ENCODE measurements at regions of chr6 and their contacts with region 1.

Region 1: DNA sequence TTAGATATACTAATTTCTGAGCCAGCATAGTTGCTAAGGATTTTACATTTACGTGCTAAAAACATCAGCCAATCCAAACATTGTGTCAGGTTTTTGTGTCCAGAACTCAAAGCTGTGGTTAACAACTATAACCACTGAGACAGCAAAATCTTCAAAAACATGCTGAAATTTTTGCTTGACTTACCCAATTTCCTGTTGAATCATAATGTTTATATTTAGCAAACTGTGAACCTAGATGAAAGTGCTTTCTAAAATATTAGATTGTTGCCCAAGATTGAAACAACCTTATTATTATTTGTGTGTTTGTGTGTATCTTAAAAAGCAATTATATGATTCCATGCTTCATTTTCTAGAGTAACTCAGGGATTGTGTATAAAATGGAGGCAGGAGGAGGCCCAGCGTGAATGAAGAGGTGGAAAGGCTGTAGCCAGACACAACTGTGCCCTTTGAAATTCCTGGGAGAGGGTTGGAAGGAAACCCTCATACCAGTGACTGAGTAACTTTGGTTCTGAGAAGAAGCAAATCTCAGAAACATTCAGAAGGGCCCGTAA is 48.0 kb downstream of the ARMC2 start:
- DNase-seq: no peak
- H3K4me3 Mint-ChIP-seq: peak overlapping the region; percentile 30
- H3K27ac Mint-ChIP-seq: peak overlapping the region; percentile 80
- H3K4me1 Mint-ChIP-seq: peaks cover 37% of the 10 kb centered on the region
- H3K27me3 Mint-ChIP-seq: peaks cover 7% of the 10 kb centered on the region

Region 2: DNA sequence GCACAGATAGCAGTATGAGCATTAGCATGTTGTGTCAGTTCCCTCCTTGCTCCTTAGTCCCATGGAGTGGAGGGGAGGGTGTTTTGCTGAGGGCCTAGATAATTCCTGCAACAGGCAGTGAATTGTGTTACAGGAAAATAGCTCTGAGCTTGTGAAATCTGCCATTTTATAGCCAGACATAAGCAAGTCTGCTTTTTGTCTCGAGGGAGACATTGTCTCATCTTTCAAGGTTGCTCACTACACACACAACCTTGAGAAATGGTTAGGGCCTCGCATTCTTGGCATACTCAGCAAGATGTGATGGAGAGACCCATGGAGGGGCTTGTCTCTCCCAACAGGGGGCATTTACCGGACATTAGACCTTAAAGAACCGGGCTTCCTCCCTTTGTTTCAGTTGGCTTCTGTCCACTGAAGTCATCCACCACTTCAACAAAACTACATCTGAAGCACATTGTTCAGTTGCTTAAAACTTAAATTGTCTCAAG is 443.4 kb before region 1 on chr6:
- intact Hi-C with region 1: no loop called
- DNase-seq: no peak
- H3K4me3 Mint-ChIP-seq: no peak overlapping the region
- H3K27ac Mint-ChIP-seq: no peak overlapping the region
- H3K4me1 Mint-ChIP-seq: peaks cover 4% of the 10 kb centered on the region
- H3K27me3 Mint-ChIP-seq: peaks cover 46% of the 10 kb centered on the region

Region 3: GRCh38 chr6:108541838-108542759 is 354.1 kb before region 1 on chr6:
- intact Hi-C with region 1: loop called (anchors 2 kb)
- DNase-seq: peak; percentile 53
- H3K4me3 Mint-ChIP-seq: no peak overlapping the region
- H3K27ac Mint-ChIP-seq: no peak overlapping the region
- H3K4me1 Mint-ChIP-seq: peaks cover 15% of the 10 kb centered on the region
- H3K27me3 Mint-ChIP-seq: peaks cover 42% of the 10 kb centered on the region

Region 4: GRCh38 chr6:108835218-108835850 is 60.9 kb before region 1 on chr6:
- intact Hi-C with region 1: loop called (anchors 1 kb)
- DNase-seq: peak; percentile 71
- H3K4me3 Mint-ChIP-seq: no peak overlapping the region
- H3K27ac Mint-ChIP-seq: no peak overlapping the region
- H3K4me1 Mint-ChIP-seq: peaks cover 26% of the 10 kb centered on the region
- H3K27me3 Mint-ChIP-seq: peaks cover 20% of the 10 kb centered on the region

Region 5: DNA sequence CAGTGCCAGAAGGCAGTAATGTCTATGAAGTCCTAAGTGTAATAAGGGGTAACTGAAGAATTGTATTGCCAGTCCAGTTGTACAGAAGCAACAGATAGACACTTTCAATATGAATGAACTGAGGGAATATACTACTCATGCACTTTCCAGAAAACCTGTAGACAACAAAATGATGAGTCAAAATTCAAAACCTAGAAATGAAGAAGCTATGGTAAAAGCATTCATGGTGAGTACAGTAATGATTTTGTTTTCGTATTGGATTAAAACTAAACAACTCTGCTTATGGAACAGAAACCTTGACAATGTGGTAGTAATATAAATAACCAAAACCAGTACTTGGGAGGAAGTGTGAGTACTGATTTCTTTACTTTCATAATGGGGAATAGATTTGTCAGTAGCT is 13.0 kb before region 1 on chr6:
- intact Hi-C with region 1: loop called (anchors 1 kb)
- DNase-seq: no peak
- H3K4me3 Mint-ChIP-seq: no peak overlapping the region
- H3K27ac Mint-ChIP-seq: peak overlapping the region; percentile 84
- H3K4me1 Mint-ChIP-seq: peaks cover 37% of the 10 kb centered on the region
- H3K27me3 Mint-ChIP-seq: peaks cover 19% of the 10 kb centered on the region

Region 6: DNA sequence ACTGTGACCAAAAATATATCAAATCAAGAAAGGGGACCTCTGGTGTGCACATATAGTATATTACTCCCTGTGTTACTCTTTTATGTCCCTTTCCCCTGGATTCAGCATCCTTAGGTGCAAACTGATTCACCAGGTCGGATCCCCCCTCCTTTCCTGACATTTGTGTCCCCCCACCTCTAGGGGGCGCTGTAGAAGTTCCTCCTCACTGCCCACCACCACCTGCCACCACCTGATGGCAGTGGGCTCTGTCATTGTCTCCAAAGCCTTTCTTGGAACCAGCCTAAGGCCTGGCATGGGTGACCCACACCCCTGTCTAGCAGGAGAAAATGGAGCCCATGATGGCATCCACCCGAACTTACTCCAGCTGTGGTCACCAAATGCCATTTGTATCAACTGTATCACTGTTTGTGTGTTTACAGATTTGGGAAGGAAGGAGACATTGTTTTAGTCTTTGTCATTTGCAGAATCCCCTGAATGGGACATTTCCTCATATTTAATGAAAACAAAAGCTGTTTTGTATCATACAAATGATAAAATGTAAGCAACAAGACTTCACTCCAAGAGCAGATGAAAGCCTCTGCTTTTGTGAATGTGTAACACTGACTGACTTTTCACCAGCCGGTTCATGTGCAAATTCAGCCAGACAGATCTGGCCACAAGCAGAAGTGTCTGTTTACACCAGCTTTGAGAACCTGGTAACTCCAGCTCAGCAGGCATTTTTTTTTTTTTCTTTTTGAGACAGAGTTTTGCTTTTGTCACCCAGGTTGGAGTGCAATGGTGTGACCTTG is 18.2 kb after region 1 on chr6:
- intact Hi-C with region 1: no loop called
- DNase-seq: no peak
- H3K4me3 Mint-ChIP-seq: no peak overlapping the region
- H3K27ac Mint-ChIP-seq: no peak overlapping the region
- H3K4me1 Mint-ChIP-seq: peaks cover 4% of the 10 kb centered on the region
- H3K27me3 Mint-ChIP-seq: peaks cover 47% of the 10 kb centered on the region

Region 7: GRCh38 chr6:109073344-109074132 is 177.4 kb after region 1 on chr6:
- intact Hi-C with region 1: loop called (anchors 5 kb)
- DNase-seq: no peak
- H3K4me3 Mint-ChIP-seq: no peak overlapping the region
- H3K27ac Mint-ChIP-seq: no peak overlapping the region
- H3K4me1 Mint-ChIP-seq: peaks cover 21% of the 10 kb centered on the region
- H3K27me3 Mint-ChIP-seq: peaks cover 5% of the 10 kb centered on the region